OCI-LY7 (cell line): ENCODE measurements at regions of chr7 and their contacts with region 1.

Region 1: DNA sequence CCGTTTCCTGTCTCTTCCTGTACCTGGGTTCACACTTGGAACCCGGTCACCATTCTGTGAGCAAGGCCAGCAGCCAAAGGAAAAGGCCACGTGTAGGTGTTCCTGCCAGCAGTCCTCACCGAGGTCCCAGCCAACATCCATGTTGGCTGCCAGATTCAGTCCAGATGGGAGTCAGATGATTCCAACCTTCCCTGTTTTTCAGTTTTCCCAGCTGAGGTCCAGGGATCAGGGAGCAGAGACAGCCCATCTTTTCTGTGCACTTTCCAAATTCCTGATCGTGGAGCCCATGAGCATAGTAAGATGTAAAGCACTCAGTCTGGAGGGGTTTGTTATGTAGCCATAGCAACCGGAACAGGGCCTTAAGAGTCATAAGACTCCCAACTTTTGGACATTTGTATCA is 3.9 kb upstream of the PVRIG start:
- DNase-seq: no peak
- H3K4me3 ChIP-seq: no peak overlapping the region
- H3K27ac ChIP-seq: peak overlapping the region; percentile 96
- H3K4me1 ChIP-seq: peaks cover 81% of the 10 kb centered on the region
- CTCF ChIP-seq: no peak

Region 2: GRCh38 chr7:99210264-99210970 is 1005.5 kb before region 1 on chr7:
- CTCF ChIA-PET with region 1: no interaction called
- POLR2A ChIA-PET with region 1: no interaction called
- intact Hi-C with region 1: no loop called
- DNase-seq: no peak
- H3K4me3 ChIP-seq: no peak overlapping the region
- H3K27ac ChIP-seq: no peak overlapping the region
- H3K4me1 ChIP-seq: no peaks in the 10 kb centered on the region
- CTCF ChIP-seq: no peak

Region 3: DNA sequence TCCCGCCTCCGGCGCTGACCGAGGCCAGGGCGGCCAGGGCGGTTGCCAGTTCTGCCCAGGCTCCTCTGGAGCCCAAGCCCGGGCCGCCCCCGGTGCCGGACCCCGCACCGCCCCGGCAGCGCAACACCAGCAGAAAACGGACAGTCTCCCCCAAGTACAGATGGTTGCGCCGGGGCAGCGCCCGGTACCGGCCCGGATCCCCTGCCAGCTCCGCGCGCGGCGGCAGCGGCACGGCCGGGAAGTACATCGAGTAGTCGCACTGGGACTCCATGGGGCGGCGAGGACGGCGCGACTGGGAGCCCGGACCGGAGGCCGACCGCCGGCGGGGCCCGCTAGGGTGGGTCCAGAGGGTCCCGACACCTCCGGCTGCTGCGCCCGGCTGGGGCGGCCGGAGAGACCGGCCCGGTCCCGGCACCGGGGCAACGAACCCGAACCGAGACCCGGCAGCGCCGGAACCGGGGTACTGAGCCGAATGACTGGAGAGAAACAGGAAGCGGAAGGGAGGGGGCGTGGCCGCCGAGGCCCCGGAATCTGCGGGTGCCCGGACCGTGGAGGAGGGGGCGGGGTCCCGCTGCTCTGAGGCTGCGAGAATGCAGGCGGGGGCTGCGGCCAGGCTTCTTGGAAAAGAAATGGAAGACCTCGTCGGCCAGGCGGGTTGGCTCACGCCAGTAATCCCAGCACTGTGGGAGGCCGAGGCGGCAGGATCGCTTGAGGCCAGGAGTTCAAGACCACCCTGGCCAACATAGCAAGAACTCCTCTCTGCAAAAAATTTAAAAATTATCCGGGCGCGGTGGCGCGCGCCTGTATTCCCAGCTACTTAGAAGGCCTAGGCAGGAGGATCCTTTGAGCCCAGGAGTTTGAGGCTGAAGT is 57.4 kb before region 1 on chr7 and contains the start of gene TRAPPC14:
- CTCF ChIA-PET with region 1: no interaction called
- POLR2A ChIA-PET with region 1: interaction called, 3 read pairs
- intact Hi-C with region 1: loop called (anchors 5 kb)
- DNase-seq: peak; percentile 87
- H3K4me3 ChIP-seq: peak within 1 kb of the TSS; percentile 93
- H3K27ac ChIP-seq: peak within 1 kb of the TSS; percentile 62
- H3K4me1 ChIP-seq: peaks cover 44% of the 10 kb centered on the region
- CTCF ChIP-seq: no peak
- total RNA-seq, gene TRAPPC14: 30.6 and 38.8 TPM in 2 replicates

Region 4: DNA sequence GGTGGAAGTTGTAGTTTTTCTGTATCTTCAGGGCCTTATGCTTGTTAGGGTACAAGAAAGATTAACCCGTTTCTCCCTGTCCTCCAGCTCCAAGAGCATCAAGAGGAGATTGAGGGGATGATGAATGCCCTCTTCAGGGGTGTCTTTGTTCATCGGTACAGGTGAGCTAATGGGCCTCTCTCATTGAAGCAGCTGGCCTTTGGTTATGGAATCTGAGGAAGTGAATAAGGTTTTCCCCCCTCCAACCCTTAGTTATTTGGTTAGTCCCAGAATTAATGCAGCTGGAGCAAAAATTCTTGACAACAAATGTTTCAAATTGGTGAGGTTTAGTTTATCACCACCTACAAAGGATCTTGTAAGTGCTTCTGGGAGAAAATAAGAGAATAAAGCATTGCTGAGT is 20.7 kb before region 1 on chr7:
- CTCF ChIA-PET with region 1: interaction called, 5 read pairs
- POLR2A ChIA-PET with region 1: interaction called, 37 read pairs
- intact Hi-C with region 1: loop called (anchors 1 kb)
- DNase-seq: peak; percentile 54
- H3K4me3 ChIP-seq: peak overlapping the region; percentile 11
- H3K27ac ChIP-seq: peak overlapping the region; percentile 95
- H3K4me1 ChIP-seq: peaks cover 95% of the 10 kb centered on the region
- CTCF ChIP-seq: no peak

Region 5: DNA sequence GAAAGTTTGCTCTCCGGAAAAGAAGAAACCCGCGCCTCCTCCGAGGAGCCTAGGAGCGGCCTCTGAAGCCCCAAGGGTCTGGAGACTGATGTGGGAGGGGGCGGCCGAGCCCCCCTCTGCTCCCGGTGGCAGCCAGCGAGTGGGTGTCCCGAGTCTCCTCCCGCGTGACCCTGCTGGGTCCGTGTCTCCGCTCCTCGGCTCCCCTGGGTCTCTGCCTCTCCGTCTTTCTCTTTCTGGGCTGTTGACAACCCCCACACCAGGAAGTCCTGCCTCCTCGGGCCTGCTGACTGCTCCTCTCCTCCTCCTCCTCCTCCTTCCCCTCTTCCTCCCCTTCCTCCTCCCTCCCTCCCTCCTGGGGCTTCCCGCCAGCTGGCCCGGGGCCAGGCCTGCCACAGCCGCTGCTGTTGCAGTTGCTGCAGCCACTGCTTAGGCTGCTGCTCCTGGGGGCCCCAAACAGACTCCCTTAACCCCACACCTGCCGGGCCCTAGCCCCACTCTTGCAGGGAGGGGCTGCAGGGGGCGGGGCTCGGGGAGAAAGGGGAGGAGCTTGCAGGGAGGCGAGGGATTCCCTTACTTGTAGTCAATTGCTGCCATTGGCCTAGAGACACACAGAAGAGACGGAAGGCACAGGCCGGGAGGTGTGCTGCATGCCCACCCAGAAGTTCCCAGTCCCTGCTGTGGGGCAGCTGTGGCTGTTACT is 263.2 kb after region 1 on chr7 and contains the start of gene TSC22D4:
- CTCF ChIA-PET with region 1: interaction called, 11 read pairs
- POLR2A ChIA-PET with region 1: no interaction called
- intact Hi-C with region 1: no loop called
- DNase-seq: peak; percentile 97
- H3K4me3 ChIP-seq: peak within 1 kb of the TSS; percentile 86
- H3K27ac ChIP-seq: peak within 1 kb of the TSS; percentile 75
- H3K4me1 ChIP-seq: peaks cover 40% of the 10 kb centered on the region
- CTCF ChIP-seq: no peak
- total RNA-seq, gene TSC22D4: 38.5 and 41.4 TPM in 2 replicates